Activated CD4-positive, alpha-beta memory T cell treated with anti-CD3 and anti-CD28 coated beads for 36 hours (primary cell): ENCODE measurements at regions of chr1 and their contacts with region 1.

Region 1: DNA sequence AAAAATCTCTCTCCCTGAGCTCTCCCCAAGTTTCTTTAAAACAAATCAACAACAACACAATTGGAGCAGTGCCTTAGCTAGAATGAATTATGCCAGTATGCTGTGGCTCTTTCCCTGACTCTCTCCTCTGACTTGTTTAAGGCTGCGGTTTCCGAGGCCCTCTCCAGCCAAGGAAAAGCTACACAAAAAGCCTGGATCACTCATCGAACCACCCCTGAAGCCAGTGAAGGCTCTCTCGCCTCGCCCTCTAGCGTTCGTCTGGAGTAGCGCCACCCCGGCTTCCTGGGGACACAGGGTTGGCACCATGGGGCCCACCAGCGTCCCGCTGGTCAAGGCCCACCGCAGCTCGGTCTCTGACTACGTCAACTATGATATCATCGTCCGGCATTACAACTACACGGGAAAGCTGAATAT is 1.9 kb downstream of the S1PR1 start:
- DNase-seq: peak; percentile 95
- H3K4me3 Mint-ChIP-seq: peak overlapping the region; percentile 94
- H3K27ac Mint-ChIP-seq: peak overlapping the region; percentile 100
- H3K4me1 Mint-ChIP-seq: peaks cover 47% of the 10 kb centered on the region
- H3K27me3 Mint-ChIP-seq: peaks cover 2% of the 10 kb centered on the region

Region 2: DNA sequence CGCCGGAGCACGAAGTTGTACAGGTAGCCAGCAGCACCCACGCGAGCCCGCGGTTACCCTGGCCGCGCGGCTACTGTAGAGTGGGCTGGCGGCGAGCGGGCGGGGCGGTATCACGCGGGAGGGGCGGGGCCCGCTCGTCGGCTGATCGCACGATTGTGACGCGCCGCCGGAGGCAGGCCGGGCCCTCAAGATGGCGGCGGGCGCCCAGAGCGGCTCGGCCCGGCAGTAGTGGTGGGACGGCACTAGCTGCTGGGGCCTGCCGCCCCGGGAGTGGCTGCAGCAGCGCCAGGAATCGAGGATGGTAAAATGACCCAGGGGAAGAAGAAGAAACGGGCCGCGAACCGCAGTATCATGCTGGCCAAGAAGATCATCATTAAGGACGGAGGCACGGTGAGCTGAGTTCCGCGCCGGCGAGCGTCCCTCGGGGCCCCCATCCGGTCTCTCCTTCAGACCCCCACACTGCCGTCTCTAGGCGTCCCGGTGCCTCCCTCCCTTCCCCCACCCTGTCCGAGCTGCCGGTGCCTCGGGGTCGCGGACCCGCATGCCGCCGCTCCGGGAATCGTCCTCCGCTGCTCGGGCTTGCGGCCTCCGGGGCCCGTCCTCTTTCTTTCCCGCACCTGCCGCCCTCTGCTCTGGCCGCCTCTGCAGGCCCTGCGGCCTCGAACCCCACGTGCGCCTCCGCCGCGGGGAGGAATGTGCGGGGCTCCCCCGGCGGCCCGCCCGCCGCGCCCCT is 1200.6 kb before region 1 on chr1:
- CTCF ChIA-PET with region 1: interaction called, 3 read pairs
- POLR2A ChIA-PET with region 1: no interaction called
- intact Hi-C with region 1: loop called (anchors 5 kb)
- DNase-seq: peak; percentile 93
- H3K4me3 Mint-ChIP-seq: peak overlapping the region; percentile 97
- H3K27ac Mint-ChIP-seq: peak overlapping the region; percentile 100
- H3K4me1 Mint-ChIP-seq: peaks cover 54% of the 10 kb centered on the region
- H3K27me3 Mint-ChIP-seq: peaks cover 2% of the 10 kb centered on the region

Region 3: DNA sequence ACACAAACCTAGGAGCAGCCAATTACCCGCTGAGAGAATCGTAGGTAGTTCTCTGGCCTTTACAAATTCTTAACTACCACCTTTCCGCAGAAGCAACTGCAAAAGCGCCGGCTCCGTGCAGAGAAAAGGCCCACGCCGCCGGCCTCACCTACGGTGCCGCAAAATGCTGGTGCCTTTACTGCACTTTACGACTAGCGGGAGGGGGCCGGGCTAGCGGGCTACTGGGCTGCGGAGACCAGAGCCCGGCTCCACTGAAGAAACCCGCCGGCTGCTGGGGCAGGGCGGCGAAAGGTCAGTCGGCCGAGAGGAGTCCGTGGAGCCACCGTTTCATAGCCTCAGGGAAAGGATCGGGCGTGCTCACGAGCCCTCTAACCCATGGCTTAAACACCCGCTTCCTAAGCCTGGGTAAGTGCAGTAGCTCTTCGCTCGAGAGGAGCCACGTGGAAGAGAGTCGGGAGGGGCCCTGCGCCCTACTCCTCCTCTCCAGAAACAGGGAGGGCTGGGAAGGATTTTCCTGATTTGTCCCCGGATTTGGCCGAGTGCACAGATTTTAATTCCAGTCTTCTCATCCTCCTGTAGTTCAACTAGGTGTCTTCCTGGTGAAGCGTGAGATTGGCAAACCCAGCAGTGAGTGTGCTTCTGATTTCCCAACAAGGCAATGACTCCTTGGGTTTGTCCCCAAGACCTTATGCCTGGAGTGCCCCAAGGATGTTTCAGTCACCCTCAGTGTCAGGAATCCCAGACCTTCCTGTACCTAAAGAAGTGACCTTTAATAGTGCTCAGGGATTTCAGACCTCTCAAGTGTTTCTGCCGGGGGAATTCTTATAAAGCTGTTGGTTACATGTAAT is 212.8 kb before region 1 on chr1 and contains the start of gene DPH5:
- CTCF ChIA-PET with region 1: interaction called, 3 read pairs
- POLR2A ChIA-PET with region 1: interaction called, 5 read pairs
- intact Hi-C with region 1: loop called (anchors 1 kb)
- DNase-seq: peak; percentile 94
- H3K4me3 Mint-ChIP-seq: peak within 1 kb of the TSS; percentile 89
- H3K27ac Mint-ChIP-seq: peak within 1 kb of the TSS; percentile 89
- H3K4me1 Mint-ChIP-seq: peaks cover 54% of the 10 kb centered on the region
- H3K27me3 Mint-ChIP-seq: no peaks in the 10 kb centered on the region
- total RNA-seq, gene DPH5: 56.5 to 59.6 TPM

Region 4: GRCh38 chr1:101136739-101137138 is 101.9 kb before region 1 on chr1:
- CTCF ChIA-PET with region 1: interaction called, 82 read pairs
- POLR2A ChIA-PET with region 1: interaction called, 11 read pairs
- intact Hi-C with region 1: loop called (anchors 1 kb)
- DNase-seq: peak; percentile 31
- H3K4me3 Mint-ChIP-seq: peak overlapping the region; percentile 14
- H3K27ac Mint-ChIP-seq: peak overlapping the region; percentile 79
- H3K4me1 Mint-ChIP-seq: peaks cover 60% of the 10 kb centered on the region
- H3K27me3 Mint-ChIP-seq: no peaks in the 10 kb centered on the region

Region 5: DNA sequence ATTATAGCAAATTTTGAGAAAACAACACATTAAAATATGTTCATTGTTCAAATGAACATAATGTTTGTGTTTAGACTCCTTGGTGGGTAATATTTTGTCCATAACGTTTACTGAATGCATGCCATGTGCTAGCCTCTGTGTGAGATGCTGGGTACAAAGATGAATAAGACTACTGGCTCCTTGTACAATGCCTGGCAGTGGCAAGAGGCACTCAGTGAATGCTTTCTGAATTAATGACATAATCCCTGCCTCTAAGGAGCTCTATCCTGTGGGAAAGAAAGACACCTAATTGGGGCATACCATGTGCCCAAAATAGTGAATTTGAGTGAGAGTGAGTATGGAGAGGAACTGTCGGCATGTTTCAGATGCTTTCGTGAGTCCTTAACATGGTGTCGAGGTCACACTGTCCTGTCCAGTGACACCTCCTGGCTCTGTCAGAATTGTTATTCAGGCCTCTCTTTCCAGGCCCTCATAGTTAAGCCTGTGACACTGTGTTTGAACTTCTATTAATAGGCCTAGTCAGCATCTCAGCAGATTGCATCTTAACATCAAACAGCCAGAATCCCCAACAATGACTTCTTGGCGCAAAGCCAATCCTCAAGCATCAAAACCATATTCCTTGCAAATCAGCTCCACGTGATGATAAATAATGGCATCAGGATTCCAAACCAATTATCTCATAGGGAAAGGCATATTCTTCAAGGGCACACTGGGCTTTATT is 34.7 kb before region 1 on chr1:
- CTCF ChIA-PET with region 1: interaction called, 14 read pairs
- POLR2A ChIA-PET with region 1: interaction called, 109 read pairs
- intact Hi-C with region 1: loop called (anchors 1 kb)
- DNase-seq: no peak
- H3K4me3 Mint-ChIP-seq: no peak overlapping the region
- H3K27ac Mint-ChIP-seq: no peak overlapping the region
- H3K4me1 Mint-ChIP-seq: peaks cover 37% of the 10 kb centered on the region
- H3K27me3 Mint-ChIP-seq: no peaks in the 10 kb centered on the region

Region 6: GRCh38 chr1:101309334-101310311 is 70.9 kb after region 1 on chr1:
- CTCF ChIA-PET with region 1: interaction called, 12 read pairs
- POLR2A ChIA-PET with region 1: no interaction called
- intact Hi-C with region 1: no loop called
- DNase-seq: peak; percentile 77
- H3K4me3 Mint-ChIP-seq: peak overlapping the region; percentile 69
- H3K27ac Mint-ChIP-seq: peak overlapping the region; percentile 78
- H3K4me1 Mint-ChIP-seq: peaks cover 74% of the 10 kb centered on the region
- H3K27me3 Mint-ChIP-seq: no peaks in the 10 kb centered on the region

Region 7: GRCh38 chr1:101632548-101633256 is 394.0 kb after region 1 on chr1:
- CTCF ChIA-PET with region 1: no interaction called
- POLR2A ChIA-PET with region 1: no interaction called
- intact Hi-C with region 1: no loop called
- DNase-seq: no peak
- H3K4me3 Mint-ChIP-seq: no peak overlapping the region
- H3K27ac Mint-ChIP-seq: no peak overlapping the region
- H3K4me1 Mint-ChIP-seq: no peaks in the 10 kb centered on the region
- H3K27me3 Mint-ChIP-seq: no peaks in the 10 kb centered on the region